Left cardiac atrium (tissue), 4 donors: ENCODE measurements at regions of chr5 and their contacts with region 1.

Region 1: DNA sequence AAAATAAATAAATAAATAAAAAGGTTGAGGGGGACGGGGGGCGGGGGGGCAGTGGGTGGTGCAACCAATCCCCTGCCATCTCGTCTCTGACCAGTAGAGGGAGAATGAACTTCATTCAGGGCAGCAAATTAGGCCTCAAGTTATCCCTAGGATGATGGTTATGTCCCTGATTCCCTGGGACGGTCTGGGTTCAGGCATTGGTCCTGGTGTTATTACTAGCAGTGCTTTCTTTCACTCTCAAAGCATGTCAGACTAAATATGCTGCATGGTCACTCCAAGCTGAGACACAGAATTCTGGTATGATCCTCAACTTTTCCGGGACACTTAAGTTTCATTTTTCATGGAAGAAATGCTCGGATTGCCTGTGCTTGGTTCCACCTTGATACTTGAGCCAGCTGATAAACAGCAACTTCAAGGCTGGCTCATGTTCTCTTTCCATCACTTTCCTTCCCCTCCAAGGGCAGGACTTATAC is 59.4 kb downstream of the DAP start:
- DNase-seq: no peak
- ATAC-seq: peak; percentile 32 to 39

Region 2: DNA sequence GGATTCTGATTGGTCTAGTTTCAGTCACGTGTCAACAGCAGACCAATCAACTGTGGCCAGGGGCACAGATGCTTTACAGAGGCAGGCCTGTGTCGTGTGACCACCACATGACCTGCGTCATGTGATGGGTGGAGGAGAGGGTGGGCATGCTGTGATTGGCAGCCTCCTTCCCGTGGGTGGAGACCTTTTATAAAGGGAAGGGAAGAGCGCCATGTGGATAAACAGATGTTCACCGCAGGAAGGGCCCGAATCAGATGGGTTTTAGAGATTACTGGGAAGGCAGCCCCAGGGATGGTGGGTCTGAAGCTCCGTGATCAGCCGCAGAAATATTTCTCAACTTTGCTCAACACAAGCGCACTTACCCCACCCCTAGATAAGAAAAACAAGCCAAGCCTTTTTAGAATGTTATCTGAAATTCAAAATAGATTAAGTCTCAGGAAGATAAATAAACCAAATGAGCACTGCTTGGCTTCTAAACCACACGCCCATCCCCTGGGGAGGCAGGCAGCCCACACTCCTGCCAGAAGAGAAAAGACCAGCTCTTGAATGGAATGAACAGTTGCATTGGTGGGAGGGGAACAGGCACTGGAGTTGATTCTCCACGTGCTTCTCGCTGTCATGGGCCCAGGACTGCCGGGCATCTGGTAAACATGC is 216.3 kb before region 1 on chr5:
- intact Hi-C with region 1: no loop called
- DNase-seq: peak; percentile 83
- ATAC-seq: peak; percentile 72 to 85

Region 3: GRCh38 chr5:10595678-10596309 is 105.8 kb before region 1 on chr5:
- intact Hi-C with region 1: no loop called
- DNase-seq: peak; percentile 41
- ATAC-seq: peak; percentile 86 to 94

Region 4: GRCh38 chr5:10655161-10655971 is 46.2 kb before region 1 on chr5:
- intact Hi-C with region 1: no loop called
- DNase-seq: no peak
- ATAC-seq: no peak

Region 5: GRCh38 chr5:10757922-10758835 is 56.6 kb after region 1 on chr5:
- intact Hi-C with region 1: loop called in 1 of 2 experiments (anchors 2 kb)
- DNase-seq: no peak
- ATAC-seq: no peak